ENCODE measurements at regions of chr6 and their contacts with region 1.

Region 1: GRCh38 chr6:130843575-130844320 is 16.5 kb downstream of the SMLR1 start:
- DNase-seq: peak in 3 of 9 experiments; percentile 7 to 75 (median 64)
- ATAC-seq: peak; percentile 86
- H3K4me3 ChIP-seq: no peak overlapping the region
- H3K4me3 Mint-ChIP-seq: no peak overlapping the region
- H3K27ac ChIP-seq: no peak overlapping the region
- H3K27ac Mint-ChIP-seq: no peak overlapping the region
- H3K4me1 ChIP-seq: no peaks in the 10 kb centered on the region
- H3K4me1 Mint-ChIP-seq: no peaks in the 10 kb centered on the region
- H3K27me3 ChIP-seq: no peaks in the 10 kb centered on the region
- H3K27me3 Mint-ChIP-seq: no peaks in the 10 kb centered on the region
- CTCF ChIP-seq: peak; percentile 86

Region 2: DNA sequence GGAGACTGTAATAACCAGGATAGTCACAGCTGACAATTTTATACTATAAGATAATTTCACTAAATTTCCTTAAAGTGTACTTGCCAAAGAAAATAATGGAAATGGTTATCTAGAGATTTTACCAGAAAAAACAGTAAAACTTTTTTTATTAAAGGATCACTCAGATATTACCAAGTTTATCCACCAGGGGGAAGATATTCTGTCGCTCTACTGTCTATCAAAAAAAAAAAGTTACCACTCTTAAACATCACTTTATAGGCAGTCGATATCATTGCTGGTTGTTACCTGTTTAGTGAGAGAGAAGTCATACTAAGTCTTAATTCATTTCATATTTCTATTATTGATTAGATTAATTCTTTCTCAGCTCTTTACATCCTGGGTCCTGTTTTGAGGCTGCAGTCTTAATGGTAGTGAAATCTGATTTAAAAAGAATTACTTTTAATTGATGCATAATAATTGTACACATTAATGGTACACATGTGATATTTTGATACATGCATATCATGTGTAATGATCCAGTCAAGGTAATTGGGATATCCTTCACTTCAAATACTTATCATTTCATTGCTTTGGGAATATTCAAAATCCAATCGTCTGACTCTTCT is 806.4 kb before region 1 on chr6:
- CTCF ChIA-PET with region 1: no interaction called
- POLR2A ChIA-PET with region 1: no interaction called
- intact Hi-C with region 1: loop called (anchors 2 to 5 kb)
- DNase-seq: peak in 2 of 9 experiments; percentile 45 to 59
- ATAC-seq: peak; percentile 62
- H3K4me3 ChIP-seq: no peak overlapping the region
- H3K4me3 Mint-ChIP-seq: no peak overlapping the region
- H3K27ac ChIP-seq: no peak overlapping the region
- H3K27ac Mint-ChIP-seq: no peak overlapping the region
- H3K4me1 ChIP-seq: peaks cover 17% of the 10 kb centered on the region
- H3K4me1 Mint-ChIP-seq: peaks cover 66% of the 10 kb centered on the region
- H3K27me3 ChIP-seq: no peaks in the 10 kb centered on the region
- H3K27me3 Mint-ChIP-seq: no peaks in the 10 kb centered on the region
- CTCF ChIP-seq: peak; percentile 85

Region 3: DNA sequence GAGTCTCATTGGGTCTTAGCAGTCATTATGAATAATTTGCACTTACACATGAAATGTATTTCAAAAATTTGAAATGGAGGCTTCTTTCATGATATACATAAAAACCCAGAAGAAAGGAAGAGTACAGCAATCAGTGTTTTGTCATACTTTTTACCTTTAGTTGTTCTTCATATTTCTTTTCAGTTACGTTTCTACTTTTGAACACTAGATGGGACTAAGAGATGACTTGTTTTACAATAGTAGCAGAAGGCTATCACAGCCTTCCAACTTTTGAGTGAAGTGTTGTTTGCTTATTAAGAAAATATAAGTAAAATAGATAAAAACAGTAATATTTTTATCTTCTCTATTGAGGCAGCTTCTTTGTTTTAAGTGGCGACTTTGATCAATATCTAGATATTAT is 767.2 kb before region 1 on chr6:
- CTCF ChIA-PET with region 1: no interaction called
- POLR2A ChIA-PET with region 1: no interaction called
- intact Hi-C with region 1: loop called (anchors 2 to 5 kb)
- DNase-seq: peak in 2 of 9 experiments; percentile 25 to 39
- ATAC-seq: no peak
- H3K4me3 ChIP-seq: no peak overlapping the region
- H3K4me3 Mint-ChIP-seq: no peak overlapping the region
- H3K27ac ChIP-seq: no peak overlapping the region
- H3K27ac Mint-ChIP-seq: no peak overlapping the region
- H3K4me1 ChIP-seq: no peaks in the 10 kb centered on the region
- H3K4me1 Mint-ChIP-seq: peaks cover 18% of the 10 kb centered on the region
- H3K27me3 ChIP-seq: no peaks in the 10 kb centered on the region
- H3K27me3 Mint-ChIP-seq: no peaks in the 10 kb centered on the region
- CTCF ChIP-seq: no peak

Region 4: DNA sequence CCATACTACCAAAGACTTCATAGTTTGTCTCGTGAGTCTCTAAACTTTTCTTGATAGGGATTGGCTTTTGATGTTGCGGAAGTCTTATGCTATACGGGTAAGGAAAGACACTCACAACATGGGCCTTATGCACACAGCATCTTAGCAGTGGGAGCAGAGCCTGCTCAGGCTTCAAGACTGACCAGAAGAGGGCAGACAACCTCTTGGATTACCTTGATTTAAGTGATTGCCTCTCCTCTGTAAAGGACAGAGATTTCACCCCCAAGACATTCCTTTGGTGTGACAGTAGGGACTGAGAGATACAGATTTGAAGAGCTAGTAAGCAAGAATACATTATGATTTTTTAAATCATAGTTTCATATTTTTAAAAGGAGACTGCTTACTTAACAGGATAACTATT is 549.9 kb before region 1 on chr6:
- CTCF ChIA-PET with region 1: interaction called, 11 read pairs
- POLR2A ChIA-PET with region 1: no interaction called
- intact Hi-C with region 1: loop called (anchors 1 to 10 kb)
- DNase-seq: peak in 5 of 9 experiments; percentile 24 to 66 (median 29)
- ATAC-seq: peak; percentile 59
- H3K4me3 ChIP-seq: no peak overlapping the region
- H3K4me3 Mint-ChIP-seq: no peak overlapping the region
- H3K27ac ChIP-seq: no peak overlapping the region
- H3K27ac Mint-ChIP-seq: no peak overlapping the region
- H3K4me1 ChIP-seq: no peaks in the 10 kb centered on the region
- H3K4me1 Mint-ChIP-seq: no peaks in the 10 kb centered on the region
- H3K27me3 ChIP-seq: no peaks in the 10 kb centered on the region
- H3K27me3 Mint-ChIP-seq: no peaks in the 10 kb centered on the region
- CTCF ChIP-seq: peak; percentile 50

Region 5: DNA sequence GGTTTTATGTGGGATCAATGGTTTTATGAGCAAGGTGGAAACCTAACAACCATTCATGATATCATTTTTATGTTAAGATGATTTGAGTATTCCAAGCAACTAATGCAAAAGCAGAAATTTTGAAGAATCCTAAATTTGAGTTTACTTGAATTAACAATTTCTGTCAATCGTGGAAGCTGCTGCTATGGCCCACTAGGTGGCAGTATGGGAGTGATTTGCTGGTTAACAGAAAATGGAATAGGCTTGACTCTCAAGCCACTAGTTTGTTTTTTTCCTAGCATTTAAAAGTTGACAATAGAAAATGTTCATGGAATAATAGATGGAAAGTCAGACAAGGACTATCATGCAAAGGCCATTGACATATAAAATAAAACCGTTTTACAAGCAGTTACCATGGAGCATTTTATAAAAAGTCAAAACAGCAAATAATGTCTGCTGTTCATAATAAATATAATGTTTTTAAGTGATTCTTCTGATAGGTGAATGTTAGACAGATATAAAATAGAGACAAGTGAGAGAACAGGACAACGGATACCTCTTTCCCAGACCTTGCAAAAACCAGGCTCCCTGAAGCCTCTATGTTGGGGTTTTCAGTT is 521.0 kb before region 1 on chr6:
- CTCF ChIA-PET with region 1: interaction called, 9 read pairs
- POLR2A ChIA-PET with region 1: no interaction called
- intact Hi-C with region 1: loop called (anchors 1 kb)
- DNase-seq: peak in 8 of 9 experiments; percentile 31 to 81 (median 58)
- ATAC-seq: peak; percentile 42
- H3K4me3 ChIP-seq: no peak overlapping the region
- H3K4me3 Mint-ChIP-seq: no peak overlapping the region
- H3K27ac ChIP-seq: no peak overlapping the region
- H3K27ac Mint-ChIP-seq: no peak overlapping the region
- H3K4me1 ChIP-seq: no peaks in the 10 kb centered on the region
- H3K4me1 Mint-ChIP-seq: peaks cover 2% of the 10 kb centered on the region
- H3K27me3 ChIP-seq: no peaks in the 10 kb centered on the region
- H3K27me3 Mint-ChIP-seq: no peaks in the 10 kb centered on the region
- CTCF ChIP-seq: peak; percentile 92

Measured in CD8-positive, alpha-beta T cell (primary cell).